T-cell (primary cell): ENCODE measurements at regions of chr6 and their contacts with region 1.

Region 1: GRCh38 chr6:6680526-6680925 is 92.0 kb downstream of the LY86 start:
- DNase-seq: no peak
- ATAC-seq: no peak
- H3K4me3 ChIP-seq: no peak overlapping the region
- H3K4me3 Mint-ChIP-seq: no peak overlapping the region
- H3K27ac ChIP-seq: no peak overlapping the region
- H3K27ac Mint-ChIP-seq: no peak overlapping the region
- H3K4me1 ChIP-seq: peaks cover 0 to 18% of the 10 kb centered on the region in 2 experiments
- H3K4me1 Mint-ChIP-seq: peaks cover 12 to 23% (median 17%) of the 10 kb centered on the region in 3 donors
- H3K27me3 ChIP-seq: peaks cover 0 to 8% of the 10 kb centered on the region in 2 experiments
- H3K27me3 Mint-ChIP-seq: no peaks in the 10 kb centered on the region

Region 2: DNA sequence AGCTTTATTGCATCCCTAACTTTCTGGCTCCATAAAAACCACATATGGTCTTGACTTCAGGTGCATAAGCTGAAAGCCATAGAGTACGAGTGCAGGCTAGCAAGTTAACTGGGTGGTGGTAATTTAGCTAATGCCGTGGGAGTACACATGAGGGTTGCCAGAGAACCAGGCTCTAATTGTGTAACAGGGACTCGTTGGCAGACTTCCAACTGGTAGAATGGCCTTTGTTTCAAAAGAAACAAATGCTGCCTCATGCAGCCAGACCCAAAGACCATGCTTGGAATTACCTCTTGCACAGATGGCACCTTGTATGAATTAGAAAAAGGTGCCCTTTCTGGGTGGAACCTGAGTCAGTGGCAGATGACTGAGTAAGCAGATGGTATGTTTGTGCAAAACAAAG is 18.8 kb before region 1 on chr6:
- CTCF ChIA-PET with region 1: interaction called in 1 of 2 experiments, 11 read pairs
- POLR2A ChIA-PET with region 1: no interaction called
- DNase-seq: no peak
- ATAC-seq: no peak
- H3K4me3 ChIP-seq: no peak overlapping the region
- H3K4me3 Mint-ChIP-seq: peak overlapping the region in 1 of 3 donors; percentile 78
- H3K27ac ChIP-seq: no peak overlapping the region
- H3K27ac Mint-ChIP-seq: no peak overlapping the region
- H3K4me1 ChIP-seq: peaks cover 21 to 51% of the 10 kb centered on the region in 2 experiments
- H3K4me1 Mint-ChIP-seq: peaks cover 49 to 70% (median 50%) of the 10 kb centered on the region in 3 donors
- H3K27me3 ChIP-seq: peaks cover 0 to 2% of the 10 kb centered on the region in 2 experiments
- H3K27me3 Mint-ChIP-seq: no peaks in the 10 kb centered on the region

Region 3: DNA sequence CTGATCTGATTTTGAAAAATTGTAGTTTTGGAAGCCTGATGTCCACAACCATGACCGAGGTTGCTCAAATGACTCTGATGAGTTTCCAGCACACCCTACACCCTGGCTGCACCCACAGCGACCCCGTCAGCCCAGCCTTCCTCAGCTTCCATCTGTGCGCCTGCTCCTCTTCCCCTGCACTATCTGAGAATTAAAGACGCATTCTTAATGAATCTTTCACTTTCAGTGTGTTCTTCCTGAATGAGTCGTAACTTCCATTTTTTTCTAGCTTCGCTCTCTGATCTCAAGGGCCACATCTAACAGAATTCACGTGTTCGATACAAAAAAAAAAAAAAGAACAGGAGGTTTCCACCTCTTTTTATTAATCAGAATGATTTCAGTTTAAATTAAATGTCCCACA is 406.0 kb after region 1 on chr6:
- CTCF ChIA-PET with region 1: no interaction called
- POLR2A ChIA-PET with region 1: interaction called in 1 of 2 experiments, 12 read pairs
- DNase-seq: peak in 23 of 35 experiments; percentile 4 to 68 (median 17)
- ATAC-seq: peak; percentile 61 to 80 (median 64)
- H3K4me3 ChIP-seq: peak overlapping the region in 1 of 2 donors; percentile 30
- H3K4me3 Mint-ChIP-seq: peak overlapping the region; percentile 74 to 82 (median 80)
- H3K27ac ChIP-seq: peak overlapping the region; percentile 15
- H3K27ac Mint-ChIP-seq: peak overlapping the region; percentile 80 to 96
- H3K4me1 ChIP-seq: peaks cover 25 to 29% of the 10 kb centered on the region in 2 experiments
- H3K4me1 Mint-ChIP-seq: peaks cover 31 to 41% (median 36%) of the 10 kb centered on the region in 3 donors
- H3K27me3 ChIP-seq: no peaks in the 10 kb centered on the region
- H3K27me3 Mint-ChIP-seq: no peaks in the 10 kb centered on the region

Region 4: GRCh38 chr6:8325743-8326142 is 1645.2 kb after region 1 on chr6:
- CTCF ChIA-PET with region 1: no interaction called
- POLR2A ChIA-PET with region 1: no interaction called
- DNase-seq: no peak
- ATAC-seq: no peak
- H3K4me3 ChIP-seq: no peak overlapping the region
- H3K4me3 Mint-ChIP-seq: no peak overlapping the region
- H3K27ac ChIP-seq: no peak overlapping the region
- H3K27ac Mint-ChIP-seq: no peak overlapping the region
- H3K4me1 ChIP-seq: no peaks in the 10 kb centered on the region
- H3K4me1 Mint-ChIP-seq: no peaks in the 10 kb centered on the region
- H3K27me3 ChIP-seq: peaks cover 2 to 3% of the 10 kb centered on the region in 2 experiments
- H3K27me3 Mint-ChIP-seq: peaks cover 5 to 6% of the 10 kb centered on the region in 2 donors